Esophagus squamous epithelium (tissue), 5 donors: ENCODE measurements at regions of chr19 and their contacts with region 1.

Region 1: DNA sequence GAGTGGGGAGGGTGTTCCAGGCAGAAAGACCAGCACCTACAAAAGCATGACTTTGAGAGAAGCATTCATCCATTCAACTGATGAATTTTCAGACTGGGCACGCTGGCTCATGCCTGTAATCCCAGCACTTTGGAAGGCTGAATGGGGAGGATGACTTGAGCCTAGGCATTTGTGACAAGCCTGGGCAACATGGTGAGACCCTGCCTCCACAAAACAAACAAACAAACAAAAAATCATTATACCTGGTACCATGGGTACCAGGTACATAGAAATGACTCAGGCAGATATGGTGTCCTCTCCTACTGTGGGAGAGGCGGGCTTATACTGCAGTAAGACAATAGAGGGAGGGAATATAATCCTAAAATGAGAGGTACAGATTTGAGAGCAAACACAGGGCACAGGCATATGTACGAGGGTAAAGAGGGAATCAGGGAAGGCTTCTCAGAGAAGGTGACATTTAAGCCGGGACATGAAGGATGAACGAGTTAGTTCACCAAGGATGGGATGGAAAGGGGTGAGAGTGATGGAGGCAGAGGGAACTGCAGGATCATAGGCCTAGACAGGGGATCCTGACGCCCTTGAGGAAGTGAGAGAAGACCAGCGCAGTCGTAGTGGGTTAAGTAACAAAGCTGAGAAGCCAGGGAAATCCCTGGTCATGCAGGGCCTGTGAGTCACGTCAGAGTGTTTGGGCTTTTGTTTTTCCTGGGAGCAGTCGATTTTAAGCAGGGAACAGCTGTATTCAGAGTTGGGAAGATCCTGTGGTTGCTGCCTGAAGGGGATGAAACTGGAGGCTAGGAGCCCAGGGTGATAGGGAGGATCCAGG is 2.9 kb downstream of the CYP2S1 start:
- DNase-seq: no peak
- H3K4me3 ChIP-seq: no peak overlapping the region
- H3K27ac ChIP-seq: peak overlapping the region; percentile 51 to 63 (median 57)
- H3K4me1 ChIP-seq: peaks cover 9 to 46% (median 16%) of the 10 kb centered on the region in 3 donors
- H3K27me3 ChIP-seq: peaks cover 0 to 44% (median 3%) of the 10 kb centered on the region in 4 donors
- CTCF ChIP-seq: peak in 1 of 6 experiments; percentile 13
- POLR2A ChIP-seq: no peak

Region 2: DNA sequence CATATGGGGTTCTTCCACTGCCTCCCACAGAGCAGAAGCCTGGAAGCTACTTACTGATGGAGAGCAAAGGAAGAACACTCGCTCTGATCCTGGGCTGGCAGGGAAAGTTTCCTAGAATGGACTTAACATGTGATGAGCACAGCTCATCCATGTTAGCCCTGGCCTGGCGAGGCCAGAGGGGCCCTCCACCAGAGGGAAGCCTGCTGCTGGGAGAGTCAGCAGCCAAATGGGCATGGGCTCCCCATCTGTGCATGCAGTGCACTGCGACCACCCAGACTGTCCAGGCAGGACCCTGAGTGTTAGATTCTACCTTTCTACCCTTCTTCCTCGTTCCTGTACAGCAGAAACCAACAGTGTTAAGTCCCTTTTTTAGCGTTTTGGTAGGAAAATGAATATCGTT is 77.2 kb after region 1 on chr19:
- intact Hi-C with region 1: loop called (anchors 5 kb)
- DNase-seq: no peak
- H3K4me3 ChIP-seq: no peak overlapping the region
- H3K27ac ChIP-seq: no peak overlapping the region
- H3K4me1 ChIP-seq: peaks cover 0 to 4% (median 0%) of the 10 kb centered on the region in 3 donors
- H3K27me3 ChIP-seq: no peaks in the 10 kb centered on the region
- CTCF ChIP-seq: no peak
- POLR2A ChIP-seq: no peak

Region 3: GRCh38 chr19:41327576-41328156 is 131.8 kb after region 1 on chr19:
- intact Hi-C with region 1: no loop called
- DNase-seq: peak; percentile 72
- H3K4me3 ChIP-seq: peak overlapping the region; percentile 20 to 53 (median 38)
- H3K27ac ChIP-seq: peak overlapping the region; percentile 85 to 90 (median 88)
- H3K4me1 ChIP-seq: peaks cover 60 to 83% (median 65%) of the 10 kb centered on the region in 3 donors
- H3K27me3 ChIP-seq: no peaks in the 10 kb centered on the region
- CTCF ChIP-seq: peak in 2 of 6 experiments; percentile 6 to 10
- POLR2A ChIP-seq: peak in 2 of 4 donors; percentile 32 to 47